Left ventricle myocardium inferior (tissue), 1 donor: ENCODE measurements at regions of chr18 and their contacts with region 1.

Region 1: DNA sequence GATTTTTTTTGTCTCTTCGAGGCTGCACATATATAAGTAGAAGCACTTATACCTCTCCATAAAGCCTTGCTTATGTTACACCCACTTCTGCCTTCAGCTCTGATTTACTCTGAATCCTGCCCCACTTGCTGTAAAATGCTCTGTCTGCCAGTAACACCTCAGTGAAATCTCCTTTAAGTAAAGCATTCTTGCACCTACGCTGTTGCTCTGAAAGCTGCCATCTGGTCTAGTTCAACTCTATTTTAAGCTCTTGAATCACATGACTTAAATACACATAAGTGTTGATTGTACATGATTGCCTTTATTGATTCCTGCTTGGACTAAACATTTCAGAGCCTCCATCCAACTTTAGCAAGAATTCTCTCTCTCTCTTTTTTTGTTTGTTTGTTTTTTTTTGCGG is 609.0 kb upstream of the CELF4 start:
- DNase-seq: no peak
- H3K4me3 ChIP-seq: no peak overlapping the region
- H3K27ac ChIP-seq: no peak overlapping the region
- H3K4me1 ChIP-seq: no peaks in the 10 kb centered on the region
- H3K27me3 ChIP-seq: no peaks in the 10 kb centered on the region
- CTCF ChIP-seq: no peak

Region 2: DNA sequence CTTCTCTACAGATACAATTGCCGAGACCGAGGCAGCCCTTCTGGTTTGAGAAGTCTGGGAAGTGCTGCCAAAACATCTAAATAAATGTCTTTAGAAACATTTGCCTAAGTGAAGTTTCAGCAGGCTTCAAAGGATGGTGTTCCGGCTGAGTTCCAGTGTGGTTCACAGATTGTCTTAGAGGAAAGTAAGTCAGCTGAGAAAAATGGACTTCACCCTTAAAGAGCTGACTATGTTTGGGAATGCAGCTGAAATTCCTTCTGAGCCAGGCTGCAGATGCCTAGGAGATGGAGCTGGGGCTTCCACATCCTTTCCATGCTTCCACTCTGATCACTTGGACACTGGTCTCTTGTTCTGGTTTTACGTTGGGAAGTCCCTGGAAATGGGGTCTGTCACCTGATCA is 1793.5 kb before region 1 on chr18:
- intact Hi-C with region 1: loop called (anchors 10 kb)
- DNase-seq: no peak
- H3K4me3 ChIP-seq: no peak overlapping the region
- H3K27ac ChIP-seq: peak overlapping the region; percentile 90
- H3K4me1 ChIP-seq: peaks cover 76% of the 10 kb centered on the region
- H3K27me3 ChIP-seq: no peaks in the 10 kb centered on the region
- CTCF ChIP-seq: no peak

Region 3: GRCh38 chr18:37778417-37779165 is 396.0 kb before region 1 on chr18:
- intact Hi-C with region 1: no loop called
- DNase-seq: peak; percentile 45
- H3K4me3 ChIP-seq: no peak overlapping the region
- H3K27ac ChIP-seq: no peak overlapping the region
- H3K4me1 ChIP-seq: no peaks in the 10 kb centered on the region
- H3K27me3 ChIP-seq: peaks cover 50% of the 10 kb centered on the region
- CTCF ChIP-seq: peak; percentile 77